ENCODE measurements at regions of chr6 and their contacts with region 1.

Region 1: DNA sequence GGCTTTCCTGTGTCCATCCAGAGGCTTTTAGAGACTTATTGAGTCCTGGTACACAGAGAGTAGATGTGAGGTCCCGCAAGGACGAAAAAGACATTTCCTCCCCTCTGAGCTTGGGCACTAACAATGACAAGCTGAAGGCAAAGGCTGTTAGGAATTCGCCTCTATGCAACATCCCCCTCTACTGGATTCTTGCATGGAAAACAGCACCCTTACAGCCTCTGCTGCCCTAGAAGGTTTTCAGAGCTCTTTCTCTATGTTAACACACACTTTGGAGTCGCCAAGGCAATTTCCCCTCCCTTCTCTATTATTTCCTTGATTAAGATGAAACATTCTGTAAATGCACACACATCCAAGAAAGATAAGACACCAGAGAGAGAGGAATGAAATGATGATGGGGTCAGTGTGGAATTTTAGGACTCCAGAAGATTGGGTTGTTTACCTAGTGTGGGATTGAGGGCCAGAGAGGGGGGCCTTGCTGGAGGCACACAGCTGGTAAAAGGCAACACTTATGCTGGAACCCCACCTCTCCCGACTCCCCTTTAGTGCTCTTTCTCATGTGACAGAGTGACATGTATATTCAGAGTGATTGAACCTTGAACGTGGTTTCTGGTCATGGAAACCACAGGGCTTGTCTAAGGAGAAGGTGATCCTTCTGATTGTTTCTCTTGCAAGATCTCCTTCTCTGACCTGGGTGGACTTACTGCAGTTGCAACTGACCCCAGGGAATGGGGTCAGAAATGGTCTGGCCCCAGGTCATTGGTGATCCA is 300.7 kb downstream of the CLIC5 start:
- DNase-seq: peak; percentile 49
- H3K4me3 Mint-ChIP-seq: peak overlapping the region; percentile 28
- H3K27ac Mint-ChIP-seq: peak overlapping the region; percentile 94
- H3K4me1 Mint-ChIP-seq: peaks cover 79% of the 10 kb centered on the region
- H3K27me3 Mint-ChIP-seq: no peaks in the 10 kb centered on the region

Region 2: DNA sequence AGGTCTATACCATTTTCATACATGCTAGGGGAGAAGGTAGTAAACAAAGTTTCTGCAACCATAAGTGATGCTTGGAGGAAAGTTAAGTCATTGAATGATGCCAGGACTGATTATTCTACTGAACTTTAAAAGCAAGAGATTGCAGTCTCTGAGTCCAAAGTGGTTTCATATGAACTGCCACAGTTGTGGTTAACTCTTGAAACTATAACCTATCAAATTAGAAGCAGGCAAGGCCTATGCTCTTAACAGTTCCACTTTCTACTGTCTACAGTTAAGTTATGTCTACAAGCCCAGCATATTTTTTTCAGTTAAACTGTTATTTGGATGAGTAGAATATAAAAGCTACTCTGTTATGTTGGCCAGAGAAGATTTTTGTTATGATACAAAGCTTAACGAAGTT is 713.3 kb before region 1 on chr6:
- intact Hi-C with region 1: loop called (anchors 10 kb)
- DNase-seq: peak; percentile 24
- H3K4me3 Mint-ChIP-seq: peak overlapping the region; percentile 5
- H3K27ac Mint-ChIP-seq: peak overlapping the region; percentile 93
- H3K4me1 Mint-ChIP-seq: peaks cover 39% of the 10 kb centered on the region
- H3K27me3 Mint-ChIP-seq: no peaks in the 10 kb centered on the region

Region 3: GRCh38 chr6:45187836-45188235 is 527.1 kb before region 1 on chr6:
- intact Hi-C with region 1: no loop called
- DNase-seq: no peak
- H3K4me3 Mint-ChIP-seq: no peak overlapping the region
- H3K27ac Mint-ChIP-seq: peak overlapping the region; percentile 53
- H3K4me1 Mint-ChIP-seq: peaks cover 43% of the 10 kb centered on the region
- H3K27me3 Mint-ChIP-seq: no peaks in the 10 kb centered on the region

Region 4: DNA sequence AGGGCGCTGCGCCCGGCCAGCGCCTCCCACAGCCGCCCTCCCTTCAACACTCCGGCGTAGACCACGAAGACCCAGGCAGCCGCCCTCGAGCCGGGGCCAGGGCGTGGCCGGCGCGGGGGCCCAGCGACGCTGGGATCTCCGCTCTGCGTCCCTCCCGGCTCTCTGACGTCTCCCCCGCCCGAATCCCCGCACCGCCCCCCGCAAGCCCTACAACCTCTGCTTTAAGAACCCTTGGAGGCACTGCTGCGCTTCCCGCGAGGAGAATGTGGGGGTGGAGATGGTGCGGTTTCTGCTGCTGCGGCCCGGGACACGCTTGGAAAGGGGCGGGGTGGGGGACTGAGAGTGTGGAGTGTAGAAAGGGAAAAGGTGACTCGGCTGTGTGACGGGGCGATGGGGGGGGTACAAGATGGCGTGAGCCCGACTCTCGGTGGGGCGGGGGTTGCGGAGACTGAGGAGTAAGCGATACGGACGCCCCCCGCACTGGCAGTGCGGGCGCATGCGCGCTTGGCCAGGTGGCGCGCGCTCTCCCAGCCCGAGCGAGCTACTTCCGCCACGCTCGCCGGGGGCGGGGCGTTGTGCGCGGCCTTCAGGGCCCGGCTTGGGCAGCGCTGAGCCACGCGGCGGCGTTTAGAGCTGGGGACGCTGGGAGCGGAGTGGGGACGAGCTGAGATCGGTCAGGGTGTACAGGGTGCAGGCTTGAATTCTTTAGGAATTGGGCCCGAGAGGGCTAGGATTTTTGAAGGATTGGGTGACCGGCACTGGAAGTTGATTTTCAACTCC is 337.2 kb before region 1 on chr6 and contains the start of gene SUPT3H:
- intact Hi-C with region 1: loop called (anchors 1 kb)
- DNase-seq: peak; percentile 89
- H3K4me3 Mint-ChIP-seq: peak within 1 kb of the TSS; percentile 99
- H3K27ac Mint-ChIP-seq: peak within 1 kb of the TSS; percentile 100
- H3K4me1 Mint-ChIP-seq: peaks cover 23% of the 10 kb centered on the region
- H3K27me3 Mint-ChIP-seq: no peaks in the 10 kb centered on the region
- total RNA-seq, gene SUPT3H: 14.8 and 19.4 TPM in 2 replicates

Region 5: GRCh38 chr6:45555981-45556771 is 158.7 kb before region 1 on chr6:
- intact Hi-C with region 1: loop called (anchors 1 kb)
- DNase-seq: no peak
- H3K4me3 Mint-ChIP-seq: no peak overlapping the region
- H3K27ac Mint-ChIP-seq: no peak overlapping the region
- H3K4me1 Mint-ChIP-seq: peaks cover 69% of the 10 kb centered on the region
- H3K27me3 Mint-ChIP-seq: no peaks in the 10 kb centered on the region

Region 6: DNA sequence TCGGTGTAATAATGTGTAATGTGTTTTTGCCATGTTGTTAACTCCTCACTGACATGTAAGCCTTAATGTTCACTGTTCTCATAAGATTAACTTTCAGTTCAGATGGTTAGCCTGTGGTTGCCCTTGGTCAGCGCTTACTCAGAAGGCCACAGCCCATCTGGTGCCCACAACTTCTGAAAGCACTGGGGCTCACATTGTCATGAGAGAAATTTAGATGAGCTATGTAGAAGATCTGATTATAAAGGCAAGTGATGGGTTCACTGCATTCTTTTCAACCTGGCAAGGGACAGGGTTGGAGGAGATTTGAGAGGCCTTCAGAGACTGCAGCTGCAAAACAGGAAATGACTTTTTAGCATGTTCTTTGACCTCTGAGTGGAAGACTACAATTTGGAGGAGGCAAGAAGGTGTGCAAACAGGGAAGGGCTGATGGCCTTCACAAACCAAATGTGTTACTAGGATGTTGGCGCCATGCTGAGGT is 94.9 kb before region 1 on chr6:
- intact Hi-C with region 1: no loop called
- DNase-seq: no peak
- H3K4me3 Mint-ChIP-seq: no peak overlapping the region
- H3K27ac Mint-ChIP-seq: peak overlapping the region; percentile 79
- H3K4me1 Mint-ChIP-seq: peaks cover 57% of the 10 kb centered on the region
- H3K27me3 Mint-ChIP-seq: no peaks in the 10 kb centered on the region

Region 7: GRCh38 chr6:45677381-45678284 is 37.3 kb before region 1 on chr6:
- intact Hi-C with region 1: loop called (anchors 2 kb)
- DNase-seq: peak; percentile 63
- H3K4me3 Mint-ChIP-seq: peak overlapping the region; percentile 67
- H3K27ac Mint-ChIP-seq: peak overlapping the region; percentile 90
- H3K4me1 Mint-ChIP-seq: peaks cover 35% of the 10 kb centered on the region
- H3K27me3 Mint-ChIP-seq: no peaks in the 10 kb centered on the region

Region 8: DNA sequence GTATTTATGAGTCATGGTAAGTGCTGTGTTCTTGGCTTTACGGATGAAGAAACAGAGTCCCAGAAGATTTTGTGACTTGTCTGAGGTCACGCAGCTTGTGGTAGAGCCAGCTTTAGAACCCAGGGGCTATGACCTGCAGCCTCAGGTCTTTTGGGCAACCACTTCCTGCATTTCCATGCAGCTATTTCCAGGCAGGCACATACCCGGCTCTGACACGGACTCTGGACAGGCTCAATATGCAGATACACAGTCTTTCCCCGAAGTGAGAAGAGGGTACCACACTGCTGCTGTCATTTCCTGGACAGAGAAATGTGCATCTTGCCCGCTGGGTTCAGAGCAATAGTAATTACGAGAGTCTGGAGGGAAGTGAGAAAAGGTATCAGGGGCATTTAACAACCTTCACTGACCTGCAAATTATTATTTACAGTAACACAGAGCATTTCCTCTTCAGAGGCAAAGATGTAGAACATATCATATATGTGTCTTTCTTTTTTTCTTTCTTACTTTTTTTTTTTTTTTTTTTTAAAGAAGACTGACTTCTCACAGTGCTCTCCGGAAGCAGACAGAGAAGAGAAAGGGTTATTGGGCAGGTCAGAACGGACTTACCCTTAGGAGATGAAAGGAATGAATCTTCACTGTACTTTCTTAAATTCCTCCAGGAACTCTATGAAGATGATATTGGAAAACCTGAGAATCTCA is 115.7 kb after region 1 on chr6:
- intact Hi-C with region 1: loop called (anchors 1 kb)
- DNase-seq: peak; percentile 48
- H3K4me3 Mint-ChIP-seq: peak overlapping the region; percentile 79
- H3K27ac Mint-ChIP-seq: peak overlapping the region; percentile 94
- H3K4me1 Mint-ChIP-seq: peaks cover 61% of the 10 kb centered on the region
- H3K27me3 Mint-ChIP-seq: no peaks in the 10 kb centered on the region